ENCODE measurements at regions of chr19 and their contacts with region 1.

Region 1: DNA sequence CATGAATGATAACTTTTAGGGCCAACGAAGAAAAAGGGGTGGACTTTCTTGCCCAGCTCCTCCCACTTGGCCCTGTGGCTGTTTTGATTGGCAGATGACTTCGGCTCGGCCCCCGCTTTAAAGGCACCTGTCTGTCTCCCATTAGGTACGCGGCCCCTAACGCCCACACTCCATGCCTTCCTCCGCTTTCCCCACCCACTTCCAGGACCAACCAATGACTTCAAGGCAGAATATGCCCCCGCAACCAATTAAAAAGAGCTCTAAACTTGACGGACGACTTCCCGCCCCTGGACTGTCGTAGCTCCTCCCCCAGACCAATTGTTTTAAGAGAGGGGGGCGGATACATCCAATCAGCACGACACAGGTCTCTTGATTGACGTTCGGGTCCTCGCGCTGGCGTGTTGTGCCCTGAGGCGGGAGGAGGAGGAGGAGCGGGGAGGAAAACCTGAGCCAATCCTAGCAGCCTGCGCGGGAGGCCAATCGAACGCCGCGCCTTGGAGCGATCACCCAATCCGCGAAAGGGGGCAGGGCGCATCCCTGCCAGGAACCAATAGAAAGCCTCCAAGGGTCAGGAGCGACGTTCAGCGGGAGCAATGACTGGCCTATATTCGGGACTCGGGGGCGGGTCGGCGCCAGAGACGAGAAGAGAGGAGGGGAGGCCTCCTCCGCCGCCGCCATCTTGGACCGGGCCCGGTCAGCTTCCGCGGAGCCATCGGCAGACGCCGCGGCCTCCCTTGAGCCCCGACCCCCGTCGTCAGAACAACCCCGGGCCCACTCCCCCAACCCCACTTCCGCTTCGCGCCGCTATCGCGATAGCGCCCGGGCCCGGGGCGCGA is at the start of gene CNOT3:
- DNase-seq: peak; percentile 99
- ATAC-seq: peak; percentile 93
- total RNA-seq, gene CNOT3: 17.6 TPM

Region 2: DNA sequence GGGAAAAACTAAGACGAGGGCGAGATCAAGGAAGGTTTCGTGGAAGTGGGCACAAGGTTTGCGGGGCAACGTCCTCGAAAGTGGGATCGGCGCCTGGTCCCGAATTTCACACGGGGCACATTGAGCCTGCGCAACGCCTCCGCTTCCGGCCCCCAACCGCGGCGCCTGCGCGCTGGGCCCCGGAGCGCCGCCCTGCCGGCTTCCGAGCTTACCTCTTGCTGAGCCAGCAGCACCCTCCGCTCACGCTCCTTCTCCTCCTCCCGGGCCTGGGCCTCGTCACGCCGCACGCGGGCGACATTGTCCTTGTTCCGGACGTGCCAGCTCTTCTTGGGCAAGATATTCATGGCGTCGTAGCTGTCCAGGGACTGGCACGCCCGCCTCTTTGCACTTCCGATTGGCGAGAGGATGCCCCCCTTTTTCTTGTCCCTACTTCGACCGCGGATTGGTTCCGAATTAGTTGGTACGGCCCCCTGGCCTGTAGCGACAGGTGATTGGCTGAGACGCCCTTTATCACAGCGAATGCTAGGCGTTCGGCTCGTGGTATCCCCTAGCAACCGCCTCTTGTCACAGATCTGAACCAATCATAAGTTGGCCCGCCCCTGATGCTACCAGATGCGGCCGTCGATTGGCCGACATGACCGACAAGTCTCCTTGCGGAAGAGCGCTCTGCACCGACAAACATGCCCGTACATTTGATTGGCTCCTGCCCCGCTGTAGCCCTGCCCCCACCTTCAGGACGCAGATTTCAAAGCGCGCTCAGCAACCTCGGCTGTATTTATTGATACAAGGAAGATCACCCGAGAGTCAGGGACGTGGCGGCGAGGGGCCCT is 22.3 kb after region 1 on chr19 and contains the start of gene LENG1:
- intact Hi-C with region 1: loop called (anchors 1 kb)
- DNase-seq: peak; percentile 100
- ATAC-seq: peak; percentile 95
- total RNA-seq, gene LENG1: 6.6 TPM

Region 3: DNA sequence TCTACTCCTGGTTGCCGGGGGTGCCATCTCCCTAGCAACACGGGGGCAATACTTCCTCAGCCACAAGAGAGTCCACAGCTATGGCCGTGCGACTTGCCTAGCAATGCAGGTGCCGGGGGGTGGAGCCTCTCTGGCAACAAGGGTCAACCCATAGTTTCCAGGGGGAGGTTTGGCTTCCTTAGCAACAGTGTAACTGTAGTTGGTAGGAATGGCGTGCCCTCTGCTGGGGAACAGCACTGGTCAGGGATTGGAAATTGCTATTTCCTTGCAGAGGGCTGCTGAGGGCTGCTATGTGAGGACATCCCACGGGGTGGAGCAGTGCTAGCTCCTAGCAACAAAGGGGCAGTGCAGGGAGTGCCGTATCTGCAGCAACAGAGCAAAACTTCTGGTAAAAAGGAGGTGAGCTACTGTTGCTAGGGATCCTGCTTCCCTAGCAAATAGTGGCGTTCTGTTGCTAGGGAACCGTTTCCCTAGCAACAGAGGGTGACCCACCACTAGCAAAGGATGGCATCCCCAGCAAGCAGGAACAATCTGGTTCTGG is 42.7 kb after region 1 on chr19:
- intact Hi-C with region 1: no loop called
- DNase-seq: no peak
- ATAC-seq: peak; percentile 56